Aorta (tissue), 5 donors: ENCODE measurements at regions of chr3 and their contacts with region 1.

Region 1: GRCh38 chr3:57227204-57227929 is at the start of gene APPL1:
- DNase-seq: peak; percentile 95 to 97
- ATAC-seq: peak; percentile 99
- H3K4me3 ChIP-seq: peak within 1 kb of the TSS; percentile 82 to 89
- H3K27ac ChIP-seq: peak within 1 kb of the TSS; percentile 20 to 85
- H3K4me1 ChIP-seq: peaks cover 0 to 1% of the 10 kb centered on the region in 2 donors
- H3K27me3 ChIP-seq: no peaks in the 10 kb centered on the region
- total RNA-seq, gene APPL1: 40.6 to 54.7 TPM

Region 2: DNA sequence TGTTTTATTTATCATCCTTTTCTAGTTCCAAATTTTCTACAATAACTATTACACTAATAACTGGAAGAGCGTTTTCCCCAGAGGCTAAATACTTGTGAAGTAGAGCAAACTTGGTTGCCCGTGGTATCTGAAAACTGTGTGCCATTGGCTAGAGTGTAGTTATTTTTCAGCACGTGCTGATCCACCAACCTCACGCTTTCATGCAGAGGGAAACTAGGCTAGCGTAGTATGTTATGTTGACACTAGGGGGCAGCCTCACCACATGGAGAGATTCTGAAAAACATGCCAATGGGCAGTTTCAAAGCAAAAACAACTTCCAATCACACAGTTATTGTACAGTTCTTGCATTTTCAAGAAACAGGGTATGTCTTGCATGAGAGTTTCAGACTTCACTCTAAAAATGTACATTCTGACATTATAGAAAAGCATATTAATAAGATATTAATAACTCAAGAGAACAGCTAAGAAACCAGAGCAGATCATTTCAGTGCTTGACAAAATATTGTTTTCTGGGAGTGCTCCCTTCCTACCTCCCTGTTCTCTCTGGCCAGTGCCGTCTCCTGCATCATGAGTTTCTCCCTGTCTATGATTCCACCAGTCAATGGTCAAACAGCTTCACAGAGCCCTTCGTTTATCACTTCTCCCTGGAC is 127.2 kb before region 1 on chr3:
- intact Hi-C with region 1: loop called in 1 of 2 experiments (anchors 10 kb)
- DNase-seq: peak in 1 of 2 donors; percentile 64
- ATAC-seq: peak; percentile 88
- H3K4me3 ChIP-seq: no peak overlapping the region
- H3K27ac ChIP-seq: no peak overlapping the region
- H3K4me1 ChIP-seq: no peaks in the 10 kb centered on the region
- H3K27me3 ChIP-seq: no peaks in the 10 kb centered on the region

Region 3: GRCh38 chr3:57164657-57165573 is 62.5 kb before region 1 on chr3 and contains the start of gene IL17RD:
- intact Hi-C with region 1: loop called (anchors 2 to 5 kb)
- DNase-seq: peak; percentile 81 to 94
- ATAC-seq: peak; percentile 88
- H3K4me3 ChIP-seq: peak within 1 kb of the TSS; percentile 79 to 93
- H3K27ac ChIP-seq: no peak within 1 kb of the TSS
- H3K4me1 ChIP-seq: no peaks in the 10 kb centered on the region
- H3K27me3 ChIP-seq: no peaks in the 10 kb centered on the region
- total RNA-seq, gene IL17RD: 4.3 to 17.0 TPM